ENCODE measurements at regions of chr20 and their contacts with region 1.

Region 1: GRCh38 chr20:34834459-34834893 is 9.0 kb upstream of the NCOA6 start:
- DNase-seq: peak in 3 of 14 experiments; percentile 57 to 64 (median 57)
- ATAC-seq: no peak
- H3K4me3 ChIP-seq: no peak overlapping the region
- H3K4me3 Mint-ChIP-seq: no peak overlapping the region
- H3K27ac ChIP-seq: no peak overlapping the region
- H3K27ac Mint-ChIP-seq: no peak overlapping the region
- H3K4me1 ChIP-seq: peaks cover 3% of the 10 kb centered on the region
- H3K4me1 Mint-ChIP-seq: no peaks in the 10 kb centered on the region
- H3K27me3 ChIP-seq: no peaks in the 10 kb centered on the region
- H3K27me3 Mint-ChIP-seq: peaks cover 15% of the 10 kb centered on the region
- CTCF ChIP-seq: peak; percentile 70

Region 2: GRCh38 chr20:34720266-34720665 is 114.2 kb before region 1 on chr20:
- CTCF ChIA-PET with region 1: no interaction called
- POLR2A ChIA-PET with region 1: no interaction called
- intact Hi-C with region 1: no loop called
- DNase-seq: no peak
- ATAC-seq: no peak
- H3K4me3 ChIP-seq: no peak overlapping the region
- H3K4me3 Mint-ChIP-seq: no peak overlapping the region
- H3K27ac ChIP-seq: no peak overlapping the region
- H3K27ac Mint-ChIP-seq: no peak overlapping the region
- H3K4me1 ChIP-seq: no peaks in the 10 kb centered on the region
- H3K4me1 Mint-ChIP-seq: no peaks in the 10 kb centered on the region
- H3K27me3 ChIP-seq: no peaks in the 10 kb centered on the region
- H3K27me3 Mint-ChIP-seq: no peaks in the 10 kb centered on the region
- CTCF ChIP-seq: no peak

Region 3: DNA sequence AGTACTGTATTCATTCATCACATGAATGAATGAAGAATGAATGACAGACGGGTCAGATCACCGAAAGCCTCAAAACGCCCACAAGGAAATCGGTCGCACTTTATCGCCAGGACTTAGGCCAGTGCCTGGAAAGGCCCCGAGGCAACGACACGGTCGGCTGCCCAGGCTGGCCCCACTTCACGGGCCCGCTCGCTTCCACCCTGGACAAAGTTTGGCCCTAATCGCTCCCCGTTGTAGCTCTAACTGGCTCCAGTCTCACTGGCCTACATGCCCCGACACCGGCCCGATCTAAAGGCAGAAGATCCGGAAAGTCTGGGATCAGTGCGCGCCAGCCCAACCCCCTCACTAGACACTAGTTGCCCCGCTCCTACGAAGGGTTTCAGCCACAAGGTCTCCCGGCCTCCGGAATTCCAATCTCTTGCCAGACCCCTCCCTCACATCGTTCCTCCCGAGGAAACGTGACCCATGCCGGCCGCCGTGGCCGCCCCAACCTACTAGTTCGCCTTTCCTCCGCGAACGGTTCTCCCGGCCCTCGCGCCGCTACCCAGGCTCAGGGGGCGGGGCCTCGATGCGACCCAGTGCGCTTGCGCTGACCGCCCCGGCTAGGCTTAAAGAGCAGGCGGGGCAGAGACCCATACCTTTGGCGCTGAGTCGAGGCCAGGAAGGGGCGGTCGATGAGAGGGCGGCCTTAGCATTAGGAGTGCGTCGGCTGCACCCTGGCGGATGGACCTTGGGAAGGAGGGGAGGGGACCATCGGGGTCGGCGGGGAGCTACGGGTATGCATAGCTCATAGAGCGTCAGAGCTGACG is 121.0 kb after region 1 on chr20 and contains the starts of genes GSS and MYH7B:
- CTCF ChIA-PET with region 1: interaction called, 4 read pairs
- POLR2A ChIA-PET with region 1: interaction called, 3 read pairs
- intact Hi-C with region 1: loop called (anchors 1 kb)
- DNase-seq: peak; percentile 90 to 98 (median 96)
- ATAC-seq: peak; percentile 92
- H3K4me3 ChIP-seq: peak within 1 kb of the TSS; percentile 87
- H3K4me3 Mint-ChIP-seq: peak within 1 kb of the TSS; percentile 94
- H3K27ac ChIP-seq: peak within 1 kb of the TSS; percentile 62 to 70
- H3K27ac Mint-ChIP-seq: peak within 1 kb of the TSS; percentile 91
- H3K4me1 ChIP-seq: peaks cover 19% of the 10 kb centered on the region
- H3K4me1 Mint-ChIP-seq: peaks cover 23% of the 10 kb centered on the region
- H3K27me3 ChIP-seq: no peaks in the 10 kb centered on the region
- H3K27me3 Mint-ChIP-seq: no peaks in the 10 kb centered on the region
- CTCF ChIP-seq: no peak
- total RNA-seq, gene GSS: 24.3 to 24.7 TPM
- total RNA-seq, gene MYH7B: 0.53 to 0.58 TPM

Region 4: DNA sequence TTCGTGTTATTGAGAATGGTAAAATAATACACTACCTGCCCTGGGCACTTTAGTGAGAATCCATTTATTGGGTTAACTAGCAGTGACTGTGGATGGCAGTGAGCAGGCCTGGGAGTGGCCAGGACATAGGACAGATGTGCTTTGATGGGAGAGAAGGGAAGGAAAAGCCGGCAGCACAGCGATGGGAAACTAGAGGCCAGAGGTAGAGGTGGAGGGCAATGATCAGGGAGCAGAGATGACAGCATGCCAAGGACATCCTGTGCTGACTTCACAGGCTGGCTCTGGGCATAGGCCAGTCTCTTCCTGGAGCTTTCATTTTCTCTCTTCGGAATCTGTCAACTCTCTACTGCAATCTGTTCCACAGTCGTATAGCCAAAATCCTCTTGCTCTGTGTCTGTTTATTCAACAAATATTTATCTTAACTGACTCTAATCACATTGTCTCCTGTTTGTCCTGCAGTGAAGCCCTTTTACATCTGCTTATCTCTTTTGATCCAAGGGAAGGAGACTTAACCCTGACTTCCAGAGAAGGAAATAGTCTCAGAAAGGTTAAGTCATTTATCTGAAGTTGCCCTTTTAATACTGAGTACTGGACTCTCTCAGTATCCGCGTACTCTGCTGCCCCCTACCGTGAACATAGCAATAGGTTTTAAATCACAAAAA is 373.6 kb after region 1 on chr20:
- CTCF ChIA-PET with region 1: no interaction called
- POLR2A ChIA-PET with region 1: no interaction called
- intact Hi-C with region 1: loop called (anchors 1 to 2 kb)
- DNase-seq: peak; percentile 52 to 85 (median 72)
- ATAC-seq: peak; percentile 82
- H3K4me3 ChIP-seq: no peak overlapping the region
- H3K4me3 Mint-ChIP-seq: no peak overlapping the region
- H3K27ac ChIP-seq: no peak overlapping the region
- H3K27ac Mint-ChIP-seq: no peak overlapping the region
- H3K4me1 ChIP-seq: no peaks in the 10 kb centered on the region
- H3K4me1 Mint-ChIP-seq: no peaks in the 10 kb centered on the region
- H3K27me3 ChIP-seq: no peaks in the 10 kb centered on the region
- H3K27me3 Mint-ChIP-seq: no peaks in the 10 kb centered on the region
- CTCF ChIP-seq: peak; percentile 81

Region 5: GRCh38 chr20:35303735-35304491 is 469.4 kb after region 1 on chr20:
- CTCF ChIA-PET with region 1: no interaction called
- POLR2A ChIA-PET with region 1: no interaction called
- intact Hi-C with region 1: loop called in 1 of 2 experiments (anchors 2 kb)
- DNase-seq: peak; percentile 66 to 93 (median 78)
- ATAC-seq: peak; percentile 98
- H3K4me3 ChIP-seq: no peak overlapping the region
- H3K4me3 Mint-ChIP-seq: no peak overlapping the region
- H3K27ac ChIP-seq: no peak overlapping the region
- H3K27ac Mint-ChIP-seq: no peak overlapping the region
- H3K4me1 ChIP-seq: peaks cover 17% of the 10 kb centered on the region
- H3K4me1 Mint-ChIP-seq: peaks cover 8% of the 10 kb centered on the region
- H3K27me3 ChIP-seq: no peaks in the 10 kb centered on the region
- H3K27me3 Mint-ChIP-seq: no peaks in the 10 kb centered on the region
- CTCF ChIP-seq: peak; percentile 94

Region 6: DNA sequence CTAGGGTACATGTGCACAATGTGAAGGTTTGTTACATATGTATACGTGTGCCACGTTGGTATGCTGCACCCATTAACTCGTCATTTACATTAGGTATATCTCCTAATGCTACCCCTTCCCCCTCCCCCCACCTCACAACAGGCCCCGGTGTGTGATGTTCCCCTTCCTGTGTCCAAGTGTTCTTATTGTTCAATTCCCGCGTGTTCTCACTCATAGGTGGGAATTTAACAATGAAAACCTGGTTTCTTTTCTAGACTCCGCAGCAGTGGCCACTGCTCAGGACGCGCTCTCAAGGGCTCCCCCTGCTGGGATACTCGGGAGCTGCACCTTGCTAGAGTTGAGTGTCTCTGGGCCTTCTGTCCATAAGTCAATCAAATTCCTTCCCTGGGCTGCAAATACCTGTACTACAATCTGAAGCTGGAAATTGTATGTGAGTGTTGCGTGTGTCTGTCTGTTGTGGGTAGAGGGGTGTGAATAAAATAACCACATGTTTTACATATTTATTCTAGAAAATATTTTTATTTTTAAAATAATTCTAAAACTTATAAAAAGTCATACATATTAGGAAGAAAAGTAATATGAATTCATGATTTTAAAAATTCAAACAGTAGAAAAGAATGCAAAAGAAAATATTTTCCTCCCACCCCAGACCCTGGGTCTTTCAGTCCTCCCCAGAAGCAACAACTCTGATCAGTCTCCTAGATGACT is 612.8 kb after region 1 on chr20:
- CTCF ChIA-PET with region 1: no interaction called
- POLR2A ChIA-PET with region 1: no interaction called
- intact Hi-C with region 1: loop called in 1 of 2 experiments (anchors 5 kb)
- DNase-seq: peak; percentile 79 to 94 (median 89)
- ATAC-seq: peak; percentile 99
- H3K4me3 ChIP-seq: peak overlapping the region; percentile 40
- H3K4me3 Mint-ChIP-seq: peak overlapping the region; percentile 87
- H3K27ac ChIP-seq: no peak overlapping the region
- H3K27ac Mint-ChIP-seq: no peak overlapping the region
- H3K4me1 ChIP-seq: peaks cover 5% of the 10 kb centered on the region
- H3K4me1 Mint-ChIP-seq: peaks cover 4% of the 10 kb centered on the region
- H3K27me3 ChIP-seq: peaks cover 0 to 1% of the 10 kb centered on the region in 2 experiments
- H3K27me3 Mint-ChIP-seq: peaks cover 6% of the 10 kb centered on the region
- CTCF ChIP-seq: peak; percentile 92

Measured in CD4-positive, alpha-beta T cell (primary cell).